Activated T-helper 1 cell treated with anti-CD3 and anti-CD28 coated beads, Interleukin-12 subunit alpha, Interleukin-12 subunit beta, Interleukin-2, Interleukin-4 antibody, amounts not matched to agents 30 ng/mL and 10 ng/mL and 1 ng/mL, durations not matched to agents 14 hours and 24 hours and 36 hours (primary cell): ENCODE measurements at regions of chr16 and their contacts with region 1.

Region 1: GRCh38 chr16:1942810-1943726 is at the start of gene MSRB1:
- DNase-seq: peak; percentile 100
- H3K4me3 Mint-ChIP-seq: peak within 1 kb of the TSS; percentile 87
- H3K27ac Mint-ChIP-seq: peak within 1 kb of the TSS; percentile 58
- H3K4me1 Mint-ChIP-seq: peaks cover 19% of the 10 kb centered on the region
- H3K27me3 Mint-ChIP-seq: no peaks in the 10 kb centered on the region
- total RNA-seq, gene MSRB1: 22.1 and 26.1 TPM in 2 replicates

Region 2: GRCh38 chr16:1772736-1773584 is 170.1 kb before region 1 on chr16 and contains the starts of genes EME2 and MRPS34:
- intact Hi-C with region 1: loop called (anchors 2 kb)
- DNase-seq: peak; percentile 82
- H3K4me3 Mint-ChIP-seq: peak within 1 kb of the TSS; percentile 100
- H3K27ac Mint-ChIP-seq: peak within 1 kb of the TSS; percentile 98
- H3K4me1 Mint-ChIP-seq: peaks cover 8% of the 10 kb centered on the region
- H3K27me3 Mint-ChIP-seq: no peaks in the 10 kb centered on the region
- total RNA-seq, gene EME2: 31.0 and 32.7 TPM in 2 replicates
- total RNA-seq, gene MRPS34: 209 and 215 TPM in 2 replicates

Region 3: DNA sequence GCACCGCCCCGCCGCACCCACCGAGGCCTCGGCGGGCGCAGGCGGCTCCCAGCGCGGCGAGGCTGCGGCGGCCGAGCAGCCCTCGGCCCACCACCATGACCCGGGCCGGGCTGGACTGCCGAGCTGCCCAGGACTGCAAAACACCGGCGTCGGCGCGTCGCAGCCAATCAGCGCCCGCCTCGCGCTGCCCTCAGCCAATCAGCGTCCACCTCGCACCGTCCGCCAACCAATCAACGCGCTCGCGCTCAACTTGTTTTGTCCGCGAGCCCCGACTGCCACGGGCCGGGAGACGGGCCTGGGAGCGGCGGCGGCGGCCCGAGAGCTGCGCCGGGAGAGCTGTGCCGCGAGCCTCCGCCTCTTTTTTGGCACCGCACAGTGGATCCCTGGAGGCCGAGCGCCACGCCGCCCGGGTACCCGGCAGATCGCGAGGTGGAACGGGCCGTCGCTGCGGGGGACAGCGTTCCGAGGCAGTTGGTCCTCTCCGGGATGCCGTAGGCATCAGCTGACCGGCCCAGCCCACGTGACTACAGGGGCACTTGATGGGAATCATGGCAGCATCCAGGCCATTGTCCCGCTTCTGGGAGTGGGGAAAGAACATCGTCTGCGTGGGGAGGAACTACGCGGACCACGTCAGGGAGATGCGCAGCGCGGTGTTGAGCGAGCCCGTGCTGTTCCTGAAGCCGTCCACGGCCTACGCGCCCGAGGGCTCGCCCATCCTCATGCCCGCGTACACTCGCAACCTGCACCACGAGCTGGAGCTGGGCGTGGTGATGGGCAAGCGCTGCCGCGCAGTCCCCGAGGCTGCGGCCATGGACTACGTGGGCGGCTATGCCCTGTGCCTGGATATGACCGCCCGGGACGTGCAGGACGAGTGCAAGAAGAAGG is 116.1 kb before region 1 on chr16 and contains the starts of genes FAHD1 and HAGH:
- intact Hi-C with region 1: loop called (anchors 1 kb)
- DNase-seq: peak; percentile 91
- H3K4me3 Mint-ChIP-seq: peak within 1 kb of the TSS; percentile 92
- H3K27ac Mint-ChIP-seq: peak within 1 kb of the TSS; percentile 85
- H3K4me1 Mint-ChIP-seq: peaks cover 26% of the 10 kb centered on the region
- H3K27me3 Mint-ChIP-seq: no peaks in the 10 kb centered on the region
- total RNA-seq, gene FAHD1: 19.4 and 20.2 TPM in 2 replicates
- total RNA-seq, gene HAGH: 57.8 and 58.7 TPM in 2 replicates

Region 4: DNA sequence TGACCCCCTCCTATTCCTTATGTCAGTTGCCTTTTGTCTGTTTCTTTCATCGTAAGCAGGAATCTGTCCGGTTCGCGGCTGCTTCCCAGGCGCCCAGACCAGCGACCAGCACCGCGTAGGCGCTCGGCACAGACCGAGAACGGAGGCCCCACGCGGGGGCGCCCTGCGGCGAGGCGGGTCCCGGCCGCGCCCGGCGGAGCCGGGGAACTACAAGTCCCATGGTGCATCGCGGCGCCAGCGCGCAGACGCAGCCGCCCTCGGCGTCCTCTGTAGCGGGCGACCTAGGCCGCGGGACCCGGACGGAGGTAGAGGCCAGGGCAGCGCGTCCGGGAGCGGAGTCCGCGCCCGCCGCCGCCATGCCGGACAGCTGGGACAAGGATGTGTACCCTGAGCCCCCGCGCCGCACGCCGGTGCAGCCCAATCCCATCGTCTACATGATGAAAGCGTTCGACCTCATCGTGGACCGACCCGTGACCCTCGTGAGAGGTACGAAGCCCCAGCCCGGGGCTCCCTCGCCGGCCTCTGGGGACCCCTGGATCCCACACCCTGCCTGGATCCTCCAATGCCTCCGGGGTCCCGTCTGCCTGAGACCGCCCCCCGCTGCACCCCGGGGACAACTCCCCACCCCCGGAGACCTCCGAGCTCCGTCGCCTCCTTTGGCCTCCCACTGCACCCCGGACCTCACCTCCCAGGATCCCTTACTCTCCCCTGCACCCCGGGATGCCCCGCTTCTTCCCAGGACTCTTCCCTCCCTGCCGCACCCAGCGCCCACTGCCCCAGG is 16.4 kb after region 1 on chr16 and contains the start of gene NDUFB10:
- intact Hi-C with region 1: loop called (anchors 1 kb)
- DNase-seq: peak; percentile 93
- H3K4me3 Mint-ChIP-seq: peak within 1 kb of the TSS; percentile 97
- H3K27ac Mint-ChIP-seq: peak within 1 kb of the TSS; percentile 90
- H3K4me1 Mint-ChIP-seq: peaks cover 34% of the 10 kb centered on the region
- H3K27me3 Mint-ChIP-seq: no peaks in the 10 kb centered on the region
- total RNA-seq, gene NDUFB10: 134 and 138 TPM in 2 replicates

Region 5: GRCh38 chr16:1991948-1992703 is 49.1 kb after region 1 on chr16:
- intact Hi-C with region 1: loop called (anchors 1 kb)
- DNase-seq: peak; percentile 91
- H3K4me3 Mint-ChIP-seq: peak overlapping the region; percentile 82
- H3K27ac Mint-ChIP-seq: no peak overlapping the region
- H3K4me1 Mint-ChIP-seq: peaks cover 26% of the 10 kb centered on the region
- H3K27me3 Mint-ChIP-seq: peaks cover 11% of the 10 kb centered on the region

Region 6: DNA sequence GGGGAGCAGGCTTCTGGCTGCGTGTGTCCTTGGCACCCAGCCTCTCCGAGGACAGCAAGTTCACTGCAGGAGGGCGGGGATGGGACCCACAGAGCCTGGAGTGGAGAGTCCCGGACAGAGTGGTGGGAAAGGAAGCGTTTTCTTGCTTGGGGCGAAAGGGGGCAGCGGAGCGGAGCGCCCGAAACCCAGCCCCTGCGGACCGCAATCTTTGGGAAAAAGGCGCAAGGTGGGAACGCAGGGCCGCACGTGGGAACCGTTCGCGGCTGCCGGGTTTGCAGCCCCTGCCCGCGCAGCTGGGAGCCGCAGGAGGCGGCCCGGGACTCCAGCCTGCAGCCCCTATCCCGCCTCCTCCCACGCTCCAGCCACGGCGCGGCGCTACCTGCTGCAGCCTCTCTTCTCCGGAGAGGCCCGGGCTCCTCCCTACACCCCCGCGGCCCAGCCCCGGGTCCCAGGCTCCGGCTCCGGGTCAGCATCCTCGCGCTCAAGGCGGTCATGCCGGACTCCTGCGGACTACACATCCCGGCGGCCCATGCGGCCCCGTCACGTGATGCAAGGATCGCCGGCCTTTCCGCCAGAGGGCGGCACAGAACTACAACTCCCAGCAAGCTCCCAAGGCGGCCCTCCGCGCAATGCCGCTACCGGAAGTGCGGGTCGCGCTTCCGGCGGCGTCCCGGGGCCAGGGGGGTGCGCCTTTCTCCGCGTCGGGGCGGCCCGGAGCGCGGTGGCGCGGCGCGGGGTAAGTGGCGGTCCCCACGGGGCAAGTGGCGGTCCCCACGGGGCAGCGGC is 104.5 kb after region 1 on chr16 and contains the starts of genes NTHL1 and TSC2:
- intact Hi-C with region 1: no loop called
- DNase-seq: peak; percentile 95
- H3K4me3 Mint-ChIP-seq: peak within 1 kb of the TSS; percentile 93
- H3K27ac Mint-ChIP-seq: peak within 1 kb of the TSS; percentile 83
- H3K4me1 Mint-ChIP-seq: peaks cover 21% of the 10 kb centered on the region
- H3K27me3 Mint-ChIP-seq: no peaks in the 10 kb centered on the region
- total RNA-seq, gene NTHL1: 50.0 and 52.7 TPM in 2 replicates
- total RNA-seq, gene TSC2: 96.4 and 111 TPM in 2 replicates

Region 7: GRCh38 chr16:3106205-3106928 is 1163.3 kb after region 1 on chr16:
- intact Hi-C with region 1: loop called (anchors 10 kb)
- DNase-seq: peak; percentile 88
- H3K4me3 Mint-ChIP-seq: peak overlapping the region; percentile 85
- H3K27ac Mint-ChIP-seq: peak overlapping the region; percentile 95
- H3K4me1 Mint-ChIP-seq: peaks cover 22% of the 10 kb centered on the region
- H3K27me3 Mint-ChIP-seq: no peaks in the 10 kb centered on the region